Activated CD4-positive, alpha-beta T cell treated with anti-CD3 and anti-CD28 coated beads for 36 hours (primary cell): ENCODE measurements at regions of chr4 and their contacts with region 1.

Region 1: GRCh38 chr4:88803600-88804096 is 106.0 kb upstream of the NAP1L5 start:
- DNase-seq: peak; percentile 35
- ATAC-seq: peak; percentile 63
- H3K4me3 Mint-ChIP-seq: no peak overlapping the region
- H3K27ac Mint-ChIP-seq: no peak overlapping the region
- H3K4me1 Mint-ChIP-seq: peaks cover 14% of the 10 kb centered on the region
- H3K27me3 Mint-ChIP-seq: peaks cover 5% of the 10 kb centered on the region

Region 2: GRCh38 chr4:88070031-88070430 is 733.6 kb before region 1 on chr4:
- CTCF ChIA-PET with region 1: no interaction called
- POLR2A ChIA-PET with region 1: no interaction called
- intact Hi-C with region 1: no loop called
- DNase-seq: no peak
- ATAC-seq: no peak
- H3K4me3 Mint-ChIP-seq: no peak overlapping the region
- H3K27ac Mint-ChIP-seq: no peak overlapping the region
- H3K4me1 Mint-ChIP-seq: peaks cover 4% of the 10 kb centered on the region
- H3K27me3 Mint-ChIP-seq: no peaks in the 10 kb centered on the region

Region 3: GRCh38 chr4:88378691-88379559 is 424.7 kb before region 1 on chr4 and contains the start of gene HERC6:
- CTCF ChIA-PET with region 1: no interaction called
- POLR2A ChIA-PET with region 1: no interaction called
- intact Hi-C with region 1: loop called in 1 of 2 experiments (anchors 5 kb)
- DNase-seq: peak; percentile 88
- ATAC-seq: peak; percentile 47
- H3K4me3 Mint-ChIP-seq: peak within 1 kb of the TSS; percentile 75
- H3K27ac Mint-ChIP-seq: peak within 1 kb of the TSS; percentile 84
- H3K4me1 Mint-ChIP-seq: peaks cover 39% of the 10 kb centered on the region
- H3K27me3 Mint-ChIP-seq: no peaks in the 10 kb centered on the region
- total RNA-seq, gene HERC6: 7.3 to 9.3 TPM

Region 4: DNA sequence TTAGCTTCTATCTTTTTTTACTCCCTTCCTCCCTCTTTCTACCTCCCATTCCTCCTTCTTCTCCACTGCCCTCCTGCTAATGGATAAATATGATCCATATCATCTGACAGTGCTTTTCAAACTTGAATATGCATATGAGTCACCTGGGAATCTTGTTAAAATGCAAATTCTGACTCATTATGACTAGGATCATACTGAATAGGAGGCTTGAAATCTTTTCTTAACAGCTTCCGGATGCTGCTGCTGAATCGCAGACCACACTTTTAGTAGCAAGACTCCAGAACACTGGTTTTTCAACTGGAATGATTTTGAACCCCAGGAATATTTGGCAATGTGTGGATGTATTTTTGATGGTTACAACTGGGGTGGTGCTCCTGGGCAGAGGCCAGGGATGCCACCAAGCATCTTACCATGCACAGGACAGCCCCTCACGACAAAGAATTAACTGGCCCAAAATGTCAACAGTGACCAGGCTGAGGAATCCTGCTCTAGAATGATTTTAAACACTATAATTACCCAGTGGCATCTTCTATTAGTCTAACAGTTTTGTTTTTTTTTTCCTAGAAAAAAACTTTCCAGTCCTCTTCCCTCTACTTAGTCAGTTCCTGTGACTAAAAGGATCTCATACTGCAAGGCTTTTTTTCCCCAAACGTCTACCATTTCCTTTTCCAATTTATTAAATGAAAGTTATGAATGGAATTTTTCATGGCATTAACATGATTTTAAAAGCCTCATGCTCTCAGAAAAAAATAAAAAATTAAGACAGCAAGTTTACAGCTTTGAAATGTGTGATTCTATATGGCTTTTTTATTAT is 269.5 kb before region 1 on chr4:
- CTCF ChIA-PET with region 1: no interaction called
- POLR2A ChIA-PET with region 1: interaction called, 3 read pairs
- intact Hi-C with region 1: loop called (anchors 1 to 5 kb)
- DNase-seq: no peak
- ATAC-seq: no peak
- H3K4me3 Mint-ChIP-seq: no peak overlapping the region
- H3K27ac Mint-ChIP-seq: no peak overlapping the region
- H3K4me1 Mint-ChIP-seq: peaks cover 23% of the 10 kb centered on the region
- H3K27me3 Mint-ChIP-seq: no peaks in the 10 kb centered on the region

Region 5: DNA sequence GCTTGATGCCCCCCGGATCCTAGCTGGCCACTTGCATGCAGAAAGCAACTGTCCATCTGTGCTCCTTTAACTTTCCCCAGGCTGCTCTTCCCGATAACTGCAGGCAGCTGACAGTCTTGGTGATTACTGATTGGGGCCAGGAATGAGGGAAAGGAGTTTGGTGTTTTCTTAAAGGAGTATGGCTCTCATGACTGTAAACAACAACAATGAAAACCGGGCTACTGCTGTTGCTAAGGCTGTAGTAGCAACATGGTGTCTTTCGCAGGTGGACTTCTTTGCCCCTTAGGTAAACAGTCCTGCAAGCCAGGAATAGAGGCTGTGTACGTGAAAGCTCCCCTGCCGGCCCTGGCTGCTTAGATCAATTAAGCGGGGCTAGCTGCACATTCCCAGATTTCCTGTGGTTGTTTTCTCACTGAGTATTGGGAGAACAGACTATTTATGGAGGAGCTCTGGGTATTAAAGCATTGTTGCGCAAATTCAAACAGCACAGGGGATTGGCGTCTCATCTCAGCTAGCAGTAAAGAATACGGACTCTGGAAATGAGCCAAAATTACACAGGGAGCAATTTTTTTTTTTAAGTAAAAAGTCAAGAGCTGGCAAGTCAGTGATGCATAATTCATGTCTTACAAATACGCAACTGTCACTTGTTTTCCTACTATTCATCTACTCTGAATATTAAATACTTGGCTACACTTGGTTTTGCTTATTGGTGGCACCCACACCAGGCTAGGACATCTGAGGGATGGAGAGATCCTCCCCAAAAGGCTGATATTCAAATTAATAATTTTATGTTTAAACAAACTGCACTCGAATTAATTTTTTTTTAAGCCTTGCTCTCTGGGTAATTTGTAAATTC is 44.4 kb before region 1 on chr4:
- CTCF ChIA-PET with region 1: no interaction called
- POLR2A ChIA-PET with region 1: no interaction called
- intact Hi-C with region 1: no loop called
- DNase-seq: no peak
- ATAC-seq: no peak
- H3K4me3 Mint-ChIP-seq: no peak overlapping the region
- H3K27ac Mint-ChIP-seq: no peak overlapping the region
- H3K4me1 Mint-ChIP-seq: no peaks in the 10 kb centered on the region
- H3K27me3 Mint-ChIP-seq: no peaks in the 10 kb centered on the region

Region 6: DNA sequence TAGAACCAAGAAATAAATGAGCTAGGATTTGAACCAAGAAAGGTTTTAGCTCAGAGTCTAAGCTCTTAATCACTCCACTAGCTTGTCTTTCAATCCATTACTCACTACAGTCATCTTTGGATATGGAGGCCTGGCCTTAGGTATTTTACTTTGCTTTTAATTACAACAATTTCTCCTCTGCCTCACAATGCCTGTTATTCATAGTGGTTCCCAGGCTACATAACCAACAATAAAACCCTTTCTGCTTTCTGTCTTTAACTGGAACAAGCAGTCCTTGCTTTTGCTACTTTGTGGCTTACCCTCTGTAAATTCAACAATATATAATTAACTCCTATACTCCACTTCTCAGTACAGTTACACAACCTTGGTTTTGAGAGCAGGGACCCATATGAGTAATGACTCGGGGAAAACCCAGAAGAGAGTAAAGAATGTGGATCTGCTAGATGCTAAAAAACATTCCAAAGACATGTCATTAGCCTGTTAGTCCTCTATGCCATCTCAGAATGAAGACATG is 11.3 kb before region 1 on chr4:
- CTCF ChIA-PET with region 1: no interaction called
- POLR2A ChIA-PET with region 1: no interaction called
- intact Hi-C with region 1: loop called (anchors 1 kb)
- DNase-seq: no peak
- ATAC-seq: peak; percentile 88
- H3K4me3 Mint-ChIP-seq: no peak overlapping the region
- H3K27ac Mint-ChIP-seq: no peak overlapping the region
- H3K4me1 Mint-ChIP-seq: peaks cover 18% of the 10 kb centered on the region
- H3K27me3 Mint-ChIP-seq: no peaks in the 10 kb centered on the region

Region 7: DNA sequence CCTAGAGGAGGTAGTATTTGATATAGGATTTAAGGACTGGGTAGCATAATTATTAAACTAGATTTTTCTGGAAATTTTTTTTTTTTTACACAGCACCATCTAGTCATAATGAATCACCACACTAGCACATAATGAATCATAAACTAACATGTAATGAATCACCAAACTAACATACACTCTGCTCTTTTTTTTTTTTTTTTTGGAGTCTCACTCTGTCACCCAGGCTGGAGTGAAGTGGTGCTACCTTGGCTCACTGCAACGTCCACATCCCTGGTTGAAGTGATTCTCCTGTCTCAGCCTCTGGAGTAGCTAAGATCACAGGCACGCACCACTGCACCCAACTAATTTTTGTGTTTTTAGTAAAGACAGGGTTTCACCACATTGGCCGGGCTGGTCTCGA is 160.8 kb after region 1 on chr4:
- CTCF ChIA-PET with region 1: no interaction called
- POLR2A ChIA-PET with region 1: no interaction called
- intact Hi-C with region 1: loop called in 1 of 2 experiments (anchors 5 kb)
- DNase-seq: peak; percentile 26
- ATAC-seq: peak; percentile 92
- H3K4me3 Mint-ChIP-seq: no peak overlapping the region
- H3K27ac Mint-ChIP-seq: no peak overlapping the region
- H3K4me1 Mint-ChIP-seq: peaks cover 11% of the 10 kb centered on the region
- H3K27me3 Mint-ChIP-seq: peaks cover 2% of the 10 kb centered on the region

Region 8: DNA sequence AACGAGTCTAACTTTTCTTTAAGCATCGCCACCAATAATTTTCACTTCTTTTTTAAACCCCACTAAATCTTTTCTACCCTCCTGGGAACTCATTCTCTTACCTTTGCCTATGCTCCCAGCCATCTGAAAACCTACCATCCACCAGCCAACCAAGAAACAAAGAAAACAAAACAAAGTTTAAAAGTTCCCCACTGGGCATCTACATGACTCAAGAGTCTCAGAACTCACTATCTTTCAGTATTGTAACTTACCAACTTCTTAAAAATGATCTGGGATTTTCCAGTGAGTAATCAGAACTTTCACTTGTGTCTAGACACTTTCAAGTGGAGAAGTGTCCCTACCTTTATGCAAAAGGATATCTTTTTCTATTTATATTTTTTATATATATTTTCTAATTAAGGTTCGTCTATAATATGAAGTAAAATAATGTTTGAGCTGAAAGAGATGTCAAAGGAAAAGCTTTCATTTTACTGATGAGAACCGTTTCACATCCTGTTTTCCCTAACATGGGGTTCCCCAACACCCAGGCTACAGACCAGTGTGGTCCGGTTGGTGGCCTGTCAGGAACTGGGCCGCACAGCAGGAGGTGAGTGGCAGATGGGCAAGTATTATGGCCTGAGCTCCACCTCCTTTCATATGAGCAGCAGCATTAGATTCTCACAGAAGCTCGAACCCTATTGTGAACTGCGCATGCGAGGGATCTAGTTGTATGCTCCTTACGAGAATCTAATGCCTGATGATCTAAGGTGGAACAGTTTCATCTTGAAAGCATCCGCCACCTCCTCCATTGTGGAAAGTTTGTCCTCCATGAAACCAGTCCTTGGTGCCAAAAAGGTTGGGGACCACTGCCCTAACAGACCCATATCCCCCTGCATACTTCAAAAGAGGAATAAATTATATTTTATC is 297.9 kb after region 1 on chr4:
- CTCF ChIA-PET with region 1: no interaction called
- POLR2A ChIA-PET with region 1: no interaction called
- intact Hi-C with region 1: loop called in 1 of 2 experiments (anchors 5 kb)
- DNase-seq: peak; percentile 16
- ATAC-seq: peak; percentile 90
- H3K4me3 Mint-ChIP-seq: no peak overlapping the region
- H3K27ac Mint-ChIP-seq: peak overlapping the region; percentile 44
- H3K4me1 Mint-ChIP-seq: peaks cover 21% of the 10 kb centered on the region
- H3K27me3 Mint-ChIP-seq: peaks cover 2% of the 10 kb centered on the region

Region 9: DNA sequence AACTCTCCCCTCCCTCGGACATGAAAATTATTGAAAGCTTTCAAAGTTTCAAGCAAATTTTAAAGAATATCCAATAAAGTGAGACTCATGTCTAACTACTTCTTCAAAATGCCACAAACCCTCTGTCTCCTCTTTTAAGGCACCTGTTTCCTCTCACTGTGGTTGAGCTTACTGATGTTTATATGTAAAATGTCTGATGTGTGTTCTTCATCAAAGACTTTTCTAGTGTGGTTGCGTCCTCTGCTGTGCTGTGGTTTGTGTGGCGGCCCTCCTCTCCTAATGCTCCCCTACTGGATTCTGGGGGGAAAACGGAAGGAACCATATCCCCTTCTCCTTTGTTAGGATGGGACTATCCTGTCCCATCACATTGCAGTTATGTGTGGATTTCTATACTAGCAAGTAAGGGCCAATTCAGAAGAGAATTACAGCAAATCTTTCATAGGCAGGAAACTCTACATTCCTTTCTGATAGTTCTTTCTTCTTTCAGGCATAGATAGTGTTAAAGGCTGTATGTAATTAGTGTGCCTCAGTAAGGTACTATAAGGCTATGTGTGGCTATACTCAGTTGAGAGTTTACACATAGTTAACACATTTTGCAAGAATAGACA is 725.0 kb after region 1 on chr4:
- CTCF ChIA-PET with region 1: no interaction called
- POLR2A ChIA-PET with region 1: no interaction called
- intact Hi-C with region 1: no loop called
- DNase-seq: no peak
- ATAC-seq: no peak
- H3K4me3 Mint-ChIP-seq: no peak overlapping the region
- H3K27ac Mint-ChIP-seq: no peak overlapping the region
- H3K4me1 Mint-ChIP-seq: peaks cover 11% of the 10 kb centered on the region
- H3K27me3 Mint-ChIP-seq: peaks cover 46% of the 10 kb centered on the region

Region 10: GRCh38 chr4:89724716-89725115 is 921.1 kb after region 1 on chr4:
- CTCF ChIA-PET with region 1: no interaction called
- POLR2A ChIA-PET with region 1: no interaction called
- intact Hi-C with region 1: no loop called
- DNase-seq: no peak
- ATAC-seq: no peak
- H3K4me3 Mint-ChIP-seq: no peak overlapping the region
- H3K27ac Mint-ChIP-seq: no peak overlapping the region
- H3K4me1 Mint-ChIP-seq: no peaks in the 10 kb centered on the region
- H3K27me3 Mint-ChIP-seq: peaks cover 4% of the 10 kb centered on the region